ENCODE measurements at regions of chr1 and their contacts with region 1.

Region 1: GRCh38 chr1:102550729-102551384 is 554.1 kb upstream of the OLFM3 start:
- DNase-seq: peak; percentile 22
- H3K4me3 ChIP-seq: no peak overlapping the region
- H3K27ac ChIP-seq: no peak overlapping the region
- H3K4me1 ChIP-seq: no peaks in the 10 kb centered on the region
- H3K27me3 ChIP-seq: no peaks in the 10 kb centered on the region
- CTCF ChIP-seq: peak; percentile 38 to 74

Region 2: DNA sequence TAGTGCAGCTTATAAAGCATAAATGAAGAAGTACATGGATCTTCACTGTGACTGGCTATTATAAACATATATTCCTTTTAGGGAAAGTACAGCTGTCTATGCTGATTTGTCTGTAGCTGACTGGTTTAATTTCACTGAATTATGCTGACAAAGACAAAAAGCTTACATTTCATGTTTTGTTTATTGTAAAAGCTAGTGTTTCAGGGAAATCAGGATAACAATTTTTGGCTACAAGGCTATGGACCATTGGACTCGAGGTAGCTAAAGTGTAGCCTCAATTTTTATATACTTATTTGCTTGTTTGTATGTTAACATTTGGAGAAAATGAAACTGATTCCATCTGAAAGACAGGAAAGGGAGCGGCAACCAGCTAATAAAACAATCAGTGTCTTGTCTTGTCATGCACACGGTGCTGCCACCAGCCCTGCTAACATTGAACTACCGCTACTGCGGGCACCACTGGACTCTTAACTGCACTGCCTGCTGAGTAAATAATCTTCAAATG is 77.3 kb after region 1 on chr1:
- CTCF ChIA-PET with region 1: no interaction called
- dilution Hi-C with region 1: no loop called
- in situ Hi-C with region 1: no loop called
- intact Hi-C with region 1: loop called (anchors 1 kb)
- DNase-seq: peak; percentile 46
- H3K4me3 ChIP-seq: peak overlapping the region; percentile 26 to 52 (median 51)
- H3K27ac ChIP-seq: peak overlapping the region; percentile 38
- H3K4me1 ChIP-seq: no peaks in the 10 kb centered on the region
- H3K27me3 ChIP-seq: no peaks in the 10 kb centered on the region
- CTCF ChIP-seq: peak in 1 of 2 donors; percentile 22

Region 3: DNA sequence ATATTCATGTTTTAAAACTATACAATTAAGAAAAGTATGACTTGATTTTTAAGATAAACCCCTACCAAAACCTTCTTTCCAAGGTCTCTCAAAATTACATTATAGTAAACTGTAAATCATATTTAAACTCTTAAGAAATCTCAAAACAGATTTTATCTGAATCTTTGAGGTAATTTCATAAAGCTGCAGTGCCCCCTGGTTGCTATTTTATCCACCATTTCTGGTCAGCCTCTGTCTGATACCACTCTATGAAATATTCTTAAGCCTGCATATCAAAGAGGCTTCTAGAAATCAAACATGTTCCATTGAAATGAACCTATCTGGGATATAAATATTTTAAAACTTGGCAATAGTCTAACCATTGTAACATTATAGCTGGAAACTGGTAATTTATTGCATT is 240.1 kb after region 1 on chr1:
- CTCF ChIA-PET with region 1: interaction called, 3 read pairs
- dilution Hi-C with region 1: no loop called
- in situ Hi-C with region 1: no loop called
- intact Hi-C with region 1: loop called (anchors 2 kb)
- DNase-seq: no peak
- H3K4me3 ChIP-seq: no peak overlapping the region
- H3K27ac ChIP-seq: no peak overlapping the region
- H3K4me1 ChIP-seq: no peaks in the 10 kb centered on the region
- H3K27me3 ChIP-seq: no peaks in the 10 kb centered on the region
- CTCF ChIP-seq: peak in 1 of 2 donors; percentile 25

Region 4: DNA sequence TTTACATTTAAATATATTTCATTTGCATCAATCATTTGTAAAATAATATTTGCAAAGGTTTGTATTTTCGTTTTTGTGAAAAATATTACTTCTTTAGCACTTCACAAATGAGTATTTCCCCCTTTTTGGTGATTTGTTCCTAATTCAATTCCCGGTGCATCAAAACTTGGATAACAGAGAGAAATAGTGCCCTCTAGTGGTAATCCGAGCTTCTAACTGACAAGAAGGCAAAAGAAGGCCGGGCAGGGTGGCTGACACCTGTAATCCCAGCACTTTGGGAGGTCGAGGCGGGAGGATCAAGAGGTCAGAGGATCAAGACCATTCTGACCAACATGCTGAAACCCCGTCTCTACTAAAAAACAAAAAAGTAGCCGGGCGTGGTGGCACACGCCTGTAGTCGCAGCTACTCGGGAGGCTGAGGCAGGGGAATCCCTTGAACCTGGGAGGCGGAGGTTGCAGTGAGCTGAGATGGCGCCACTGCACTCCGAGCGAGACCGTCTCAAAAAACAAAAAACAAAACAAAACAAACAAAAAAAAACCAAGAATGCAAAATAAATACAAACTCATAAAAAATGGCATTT is 419.7 kb after region 1 on chr1:
- CTCF ChIA-PET with region 1: no interaction called
- dilution Hi-C with region 1: no loop called
- in situ Hi-C with region 1: loop called (anchors 25 kb)
- intact Hi-C with region 1: loop called (anchors 2 kb)
- DNase-seq: peak; percentile 37
- H3K4me3 ChIP-seq: no peak overlapping the region
- H3K27ac ChIP-seq: no peak overlapping the region
- H3K4me1 ChIP-seq: no peaks in the 10 kb centered on the region
- H3K27me3 ChIP-seq: no peaks in the 10 kb centered on the region
- CTCF ChIP-seq: peak; percentile 49 to 72

Region 5: DNA sequence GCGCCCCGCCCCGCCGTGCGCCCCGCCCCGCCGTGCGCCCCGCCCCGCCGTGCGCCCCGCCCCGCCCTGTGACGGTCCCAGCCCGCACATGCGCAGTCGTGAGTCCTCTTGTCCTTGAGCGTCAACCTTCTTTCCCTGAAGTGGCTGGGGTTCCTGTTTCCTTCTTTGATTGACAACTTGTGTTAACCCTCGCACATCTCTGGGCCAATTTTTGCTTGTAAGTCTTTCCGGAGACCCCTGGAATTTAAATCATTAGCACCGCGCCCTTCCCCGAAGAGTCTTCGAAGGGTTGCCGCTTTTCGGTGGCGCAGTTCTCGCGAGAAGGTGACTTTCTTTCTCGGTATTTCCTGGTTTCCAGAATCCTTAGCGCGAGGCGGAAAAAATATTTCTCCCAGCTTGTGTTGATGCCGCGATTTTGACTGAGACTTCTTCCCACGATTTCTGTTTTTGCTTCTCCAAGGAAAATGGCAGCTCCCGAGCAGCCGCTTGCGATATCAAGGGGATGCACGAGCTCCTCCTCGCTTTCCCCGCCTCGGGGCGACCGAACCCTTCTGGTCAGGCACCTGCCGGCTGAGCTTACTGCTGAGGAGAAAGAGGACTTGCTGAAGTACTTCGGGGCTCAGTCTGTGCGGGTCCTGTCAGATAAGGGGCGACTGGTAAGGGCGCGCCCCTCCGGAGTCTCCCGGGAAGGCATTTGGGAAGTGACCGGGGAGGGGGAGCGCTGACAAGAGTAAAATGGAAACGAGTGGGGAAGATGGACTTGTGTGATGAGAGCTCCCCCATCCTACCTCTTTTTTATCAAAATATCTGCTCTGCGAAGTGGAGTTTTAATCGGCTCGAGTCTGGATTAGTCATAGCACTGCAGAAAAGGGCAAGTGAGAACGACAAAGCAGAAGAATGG is 975.0 kb after region 1 on chr1 and contains the start of gene RNPC3:
- CTCF ChIA-PET with region 1: no interaction called
- dilution Hi-C with region 1: no loop called
- in situ Hi-C with region 1: no loop called
- intact Hi-C with region 1: loop called (anchors 5 kb)
- DNase-seq: peak; percentile 84
- H3K4me3 ChIP-seq: peak within 1 kb of the TSS; percentile 70 to 84 (median 72)
- H3K27ac ChIP-seq: peak within 1 kb of the TSS; percentile 97
- H3K4me1 ChIP-seq: peaks cover 8% of the 10 kb centered on the region
- H3K27me3 ChIP-seq: no peaks in the 10 kb centered on the region
- CTCF ChIP-seq: no peak
- total RNA-seq, gene RNPC3: 13.9 to 20.5 TPM